Posterior vena cava (tissue), 2 donors: ENCODE measurements at regions of chr1 and their contacts with region 1.

Region 1: DNA sequence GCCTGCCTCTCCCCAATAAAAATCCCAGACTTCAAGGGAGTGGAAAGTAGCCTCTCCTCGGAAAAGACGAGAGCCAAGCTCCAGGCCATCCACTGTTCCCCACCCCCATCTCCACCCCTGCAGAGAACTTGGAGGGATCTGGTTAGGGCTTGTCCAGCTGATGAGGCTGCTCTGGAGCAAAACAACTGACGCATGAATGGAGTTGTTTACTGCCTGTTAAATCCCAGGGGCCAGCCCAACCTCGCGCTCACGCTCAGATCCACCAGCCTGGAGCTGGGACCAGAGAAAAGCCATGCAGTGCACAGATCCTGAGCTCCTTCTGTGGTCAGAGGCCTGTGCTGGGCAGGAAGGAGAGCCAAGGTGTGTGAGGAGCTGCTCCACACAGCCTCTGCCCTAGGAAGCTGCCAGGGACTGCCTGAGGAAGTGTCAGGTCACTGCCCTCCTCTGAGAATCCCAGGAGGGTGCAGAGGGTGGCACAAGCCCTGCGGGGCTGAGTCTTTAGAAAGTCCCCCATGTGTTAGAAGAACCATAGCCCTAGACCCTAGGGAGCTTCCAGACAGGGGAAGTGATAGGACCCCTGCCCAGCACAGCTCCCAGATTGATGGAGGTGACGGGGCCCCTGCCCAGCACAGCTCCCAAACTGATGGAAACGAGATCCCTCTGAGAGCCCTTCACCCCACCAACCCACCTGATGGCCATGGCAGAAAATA is 109.0 kb upstream of the IPO9 start:
- DNase-seq: peak; percentile 90

Region 2: GRCh38 chr1:201640624-201641023 is 79.3 kb before region 1 on chr1:
- intact Hi-C with region 1: no loop called
- DNase-seq: no peak

Region 3: DNA sequence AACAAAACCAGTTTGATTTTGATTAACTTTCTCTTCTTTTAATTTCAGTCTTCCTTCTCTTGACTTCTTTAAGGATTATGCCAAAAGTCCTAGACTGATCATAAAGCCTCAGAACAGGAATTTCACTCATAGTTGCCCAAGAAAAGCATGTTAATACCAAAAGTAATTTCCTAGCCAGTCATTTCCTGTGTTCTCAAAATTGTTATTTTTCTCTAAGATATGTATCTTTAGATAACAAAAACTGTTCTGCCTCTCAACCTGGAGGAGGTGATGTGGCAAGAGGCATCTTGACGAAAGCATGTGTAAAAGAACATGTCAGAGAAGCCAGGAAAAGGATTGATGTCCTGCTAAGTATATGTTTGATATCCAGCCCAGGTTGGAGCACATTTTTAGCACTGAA is 31.0 kb after region 1 on chr1:
- intact Hi-C with region 1: loop called in 1 of 2 experiments (anchors 2 kb)
- DNase-seq: no peak